AG04449 (cell line): ENCODE measurements at regions of chr18 and their contacts with region 1.

Region 1: GRCh38 chr18:63963615-63964256 is 6.1 kb upstream of the SERPINB8 start:
- DNase-seq: no peak
- H3K4me3 ChIP-seq: no peak overlapping the region
- CTCF ChIP-seq: peak; percentile 81

Region 2: GRCh38 chr18:63917817-63918216 is 45.9 kb before region 1 on chr18:
- CTCF ChIA-PET with region 1: no interaction called
- POLR2A ChIA-PET with region 1: no interaction called
- DNase-seq: no peak
- H3K4me3 ChIP-seq: no peak overlapping the region
- CTCF ChIP-seq: no peak

Region 3: GRCh38 chr18:63949068-63949737 is 14.5 kb before region 1 on chr18 and contains the start of gene HMSD:
- CTCF ChIA-PET with region 1: interaction called, 55 read pairs
- POLR2A ChIA-PET with region 1: no interaction called
- DNase-seq: no peak
- H3K4me3 ChIP-seq: peak within 1 kb of the TSS; percentile 56
- CTCF ChIP-seq: peak; percentile 47

Region 4: DNA sequence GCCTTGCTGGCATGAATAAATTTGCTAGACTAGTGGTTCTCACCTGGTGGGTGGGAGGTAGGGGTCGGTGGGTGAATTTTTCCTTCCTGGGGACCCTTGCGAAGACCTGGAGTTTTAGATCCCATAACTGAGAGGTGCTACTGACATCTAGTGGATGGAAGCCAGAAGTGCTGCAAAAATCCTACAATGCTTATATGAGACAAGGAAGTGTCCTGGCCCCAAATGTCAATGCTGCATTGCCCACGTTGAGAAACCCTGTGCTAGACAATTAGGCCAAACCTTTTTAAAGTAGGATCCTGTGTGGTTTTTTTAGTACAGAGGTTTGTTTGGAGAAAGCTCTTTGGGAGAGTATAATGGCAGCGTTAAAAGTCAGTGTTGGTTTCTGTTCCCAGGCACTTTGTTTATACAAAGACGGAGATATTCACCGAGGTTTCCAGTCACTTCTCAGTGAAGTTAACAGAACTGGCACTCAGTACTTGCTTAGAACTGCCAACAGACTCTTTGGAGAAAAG is 15.7 kb after region 1 on chr18:
- CTCF ChIA-PET with region 1: interaction called, 64 read pairs
- POLR2A ChIA-PET with region 1: no interaction called
- DNase-seq: no peak
- H3K4me3 ChIP-seq: 0 out of 2 replicates have a peak overlapping the region, but pooled peaks have one; percentile 3
- CTCF ChIP-seq: peak; percentile 57